Right lobe of liver (tissue), 6 donors: ENCODE measurements at regions of chr13 and their contacts with region 1.

Region 1: DNA sequence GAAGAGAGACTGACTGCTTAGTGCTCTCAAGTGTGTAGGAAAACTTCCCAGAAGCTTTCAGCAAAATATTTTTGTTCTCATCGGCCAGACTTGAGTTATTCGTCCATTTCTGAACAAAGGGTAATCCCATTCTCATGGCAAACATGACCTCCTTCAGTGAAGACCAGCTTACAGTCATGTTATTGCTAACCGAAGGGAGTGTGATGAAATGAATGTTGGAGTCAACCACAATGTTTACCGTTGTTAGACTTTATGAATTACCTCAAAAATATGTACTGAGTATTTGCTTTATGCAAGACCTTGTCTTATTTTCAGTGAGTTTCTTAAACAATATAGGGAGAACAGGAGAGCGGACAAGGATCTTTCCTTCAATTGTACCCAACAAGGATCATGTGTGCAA is 228.6 kb downstream of the LMO7 start:
- DNase-seq: no peak
- ATAC-seq: no peak
- H3K4me3 ChIP-seq: no peak overlapping the region
- H3K27ac ChIP-seq: no peak overlapping the region
- H3K4me1 ChIP-seq: no peaks in the 10 kb centered on the region
- H3K27me3 ChIP-seq: no peaks in the 10 kb centered on the region
- CTCF ChIP-seq: no peak
- POLR2A ChIP-seq: no peak

Region 2: GRCh38 chr13:75691183-75691582 is 173.5 kb before region 1 on chr13:
- intact Hi-C with region 1: loop called in 1 of 2 experiments (anchors 10 kb)
- DNase-seq: no peak
- ATAC-seq: peak in 1 of 4 donors; percentile 55
- H3K4me3 ChIP-seq: no peak overlapping the region
- H3K27ac ChIP-seq: no peak overlapping the region
- H3K4me1 ChIP-seq: no peaks in the 10 kb centered on the region
- H3K27me3 ChIP-seq: no peaks in the 10 kb centered on the region
- CTCF ChIP-seq: no peak
- POLR2A ChIP-seq: no peak